ENCODE measurements at regions of chr3 and their contacts with region 1.

Region 1: DNA sequence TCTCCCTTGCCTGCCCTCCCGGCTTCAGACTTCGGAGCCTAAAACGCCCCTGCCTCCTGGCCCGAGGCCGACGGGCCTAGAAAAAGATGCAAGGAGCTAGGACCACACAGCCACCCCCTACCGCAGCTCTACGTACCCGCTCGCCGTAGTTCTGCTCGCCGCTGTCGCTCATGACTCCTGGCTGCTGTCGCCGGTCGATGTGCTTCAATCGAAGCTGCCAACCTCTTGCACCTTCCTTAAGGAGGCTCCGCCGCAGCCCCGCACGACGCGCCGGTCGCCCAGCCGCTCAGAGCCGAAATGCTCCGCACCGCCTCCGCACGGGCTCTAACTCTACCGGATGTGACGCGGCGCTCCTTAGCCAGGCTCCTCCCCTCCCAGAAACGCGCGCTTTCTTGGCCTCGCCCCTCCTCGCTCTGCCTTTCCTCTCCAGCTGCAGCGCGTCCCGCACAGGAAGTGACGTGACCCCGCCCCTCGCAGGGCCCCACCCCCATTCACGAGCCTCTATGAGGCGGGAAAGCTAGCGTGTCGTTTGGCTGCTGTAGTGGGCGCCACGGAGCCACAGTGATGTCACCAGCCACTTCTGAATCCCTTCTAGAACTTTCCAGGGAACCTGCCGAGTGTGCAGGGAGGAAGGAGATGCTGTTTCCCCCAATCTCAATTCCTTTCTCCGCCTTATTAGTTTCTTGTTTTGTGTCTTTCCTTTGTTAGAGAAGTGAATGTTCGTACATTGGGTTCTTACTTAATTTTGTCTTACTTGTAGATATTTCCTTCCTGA is at the start of gene TRA2B:
- DNase-seq: peak; percentile 97 to 99 (median 99)
- ATAC-seq: peak; percentile 88
- H3K4me3 ChIP-seq: peak within 1 kb of the TSS; percentile 93
- H3K4me3 Mint-ChIP-seq: peak within 1 kb of the TSS; percentile 100
- H3K27ac ChIP-seq: peak within 1 kb of the TSS; percentile 97 to 98
- H3K27ac Mint-ChIP-seq: peak within 1 kb of the TSS; percentile 100
- H3K4me1 ChIP-seq: peaks cover 13% of the 10 kb centered on the region
- H3K4me1 Mint-ChIP-seq: peaks cover 41% of the 10 kb centered on the region
- H3K27me3 ChIP-seq: no peaks in the 10 kb centered on the region
- H3K27me3 Mint-ChIP-seq: no peaks in the 10 kb centered on the region
- CTCF ChIP-seq: peak; percentile 41
- total RNA-seq, gene TRA2B: 455 to 472 TPM

Region 2: GRCh38 chr3:185498503-185499396 is 439.1 kb before region 1 on chr3 and contains the start of gene TMEM41A:
- CTCF ChIA-PET with region 1: no interaction called
- POLR2A ChIA-PET with region 1: interaction called, 4 read pairs
- intact Hi-C with region 1: loop called in 1 of 2 experiments (anchors 10 kb)
- DNase-seq: peak; percentile 77 to 94 (median 89)
- ATAC-seq: peak; percentile 98
- H3K4me3 ChIP-seq: peak within 1 kb of the TSS; percentile 89 to 98
- H3K4me3 Mint-ChIP-seq: peak within 1 kb of the TSS; percentile 95
- H3K27ac ChIP-seq: peak within 1 kb of the TSS; percentile 69 to 81
- H3K27ac Mint-ChIP-seq: peak within 1 kb of the TSS; percentile 91
- H3K4me1 ChIP-seq: peaks cover 20% of the 10 kb centered on the region
- H3K4me1 Mint-ChIP-seq: peaks cover 26% of the 10 kb centered on the region
- H3K27me3 ChIP-seq: no peaks in the 10 kb centered on the region
- H3K27me3 Mint-ChIP-seq: peaks cover 2% of the 10 kb centered on the region
- CTCF ChIP-seq: no peak
- total RNA-seq, gene TMEM41A: 28.2 to 30.3 TPM

Region 3: DNA sequence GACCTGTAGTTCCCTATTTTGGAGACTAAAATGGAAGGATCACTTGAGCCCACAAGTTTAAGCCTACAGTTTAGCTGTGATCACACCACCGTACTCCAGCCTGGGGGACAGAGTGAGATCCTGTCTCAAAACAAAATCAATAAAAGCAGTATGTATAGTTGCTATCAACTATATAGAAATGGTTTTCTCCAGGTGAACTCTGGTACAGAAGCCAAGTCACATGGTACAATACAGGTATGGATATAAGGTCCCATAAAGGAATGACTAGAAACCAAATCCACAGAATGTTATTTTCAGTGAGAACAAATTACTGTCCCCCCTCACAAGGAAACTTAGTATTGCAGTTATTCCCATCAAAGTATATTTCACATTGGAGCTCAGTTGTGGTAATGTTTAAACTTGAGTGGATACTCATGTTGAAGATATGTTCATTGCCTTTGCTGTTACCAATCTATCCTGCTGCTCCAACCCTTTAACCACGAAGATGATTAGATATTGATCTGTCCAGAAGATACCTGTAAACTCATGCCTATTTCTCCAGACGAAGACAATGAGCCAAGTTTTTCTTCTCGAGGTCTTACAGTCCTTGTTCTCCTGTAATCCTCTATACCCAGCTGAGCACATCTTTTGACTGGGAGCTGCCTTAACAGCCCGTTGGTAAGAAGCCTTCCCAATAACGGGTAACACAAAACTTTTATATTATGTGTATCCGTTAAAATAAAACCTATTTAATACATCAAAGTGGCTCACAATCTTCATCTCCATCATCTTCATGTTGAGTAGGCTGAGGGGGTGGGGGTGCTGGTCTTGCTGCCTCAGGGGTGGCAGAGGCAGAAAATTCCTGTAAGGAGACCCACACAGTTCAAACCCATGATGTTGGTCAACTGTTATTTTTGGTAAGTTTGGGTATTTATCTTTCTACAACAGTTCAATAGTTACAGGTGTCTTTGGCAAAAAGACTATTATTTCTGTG is 24.7 kb before region 1 on chr3:
- CTCF ChIA-PET with region 1: no interaction called
- POLR2A ChIA-PET with region 1: interaction called, 11 read pairs
- intact Hi-C with region 1: loop called in 1 of 2 experiments (anchors 2 kb)
- DNase-seq: no peak
- ATAC-seq: peak; percentile 18
- H3K4me3 ChIP-seq: no peak overlapping the region
- H3K4me3 Mint-ChIP-seq: no peak overlapping the region
- H3K27ac ChIP-seq: no peak overlapping the region
- H3K27ac Mint-ChIP-seq: peak overlapping the region; percentile 13
- H3K4me1 ChIP-seq: no peaks in the 10 kb centered on the region
- H3K4me1 Mint-ChIP-seq: peaks cover 6% of the 10 kb centered on the region
- H3K27me3 ChIP-seq: no peaks in the 10 kb centered on the region
- H3K27me3 Mint-ChIP-seq: no peaks in the 10 kb centered on the region
- CTCF ChIP-seq: no peak

Region 4: DNA sequence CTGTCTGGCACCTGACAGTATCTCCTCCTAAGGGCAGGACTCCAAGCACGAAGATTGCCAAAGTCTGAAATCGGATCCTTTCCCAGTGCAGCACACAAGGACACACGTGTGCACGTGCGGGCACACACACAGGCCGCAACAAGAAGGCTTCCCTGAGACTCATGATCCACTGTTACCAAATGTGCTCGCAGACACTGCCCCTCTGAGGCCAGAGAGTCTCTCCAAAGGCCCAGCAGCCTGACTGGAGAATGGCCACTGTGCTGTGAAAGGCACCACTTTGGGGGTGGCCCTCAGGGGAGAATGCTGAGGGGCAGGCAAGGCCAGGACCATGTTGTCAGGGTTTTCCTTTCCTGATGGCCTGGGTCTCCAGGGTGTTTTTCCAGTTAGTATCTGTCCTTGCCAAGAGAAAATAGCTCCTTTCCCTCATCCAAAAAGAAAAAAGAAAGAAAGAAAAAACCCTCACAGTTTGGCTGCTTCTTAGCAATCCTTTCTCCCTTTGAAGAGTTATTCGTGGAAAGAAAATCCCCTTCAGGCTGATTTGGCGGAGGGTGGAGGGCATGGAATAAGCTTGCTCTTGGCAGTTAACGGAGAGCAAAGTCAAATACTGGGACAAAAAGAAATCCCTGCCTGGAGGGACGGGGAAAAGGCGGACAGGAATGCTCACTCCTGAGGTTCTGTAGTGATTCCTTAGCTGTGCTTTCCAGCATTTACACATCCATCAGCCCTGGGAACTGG is 283.2 kb after region 1 on chr3:
- CTCF ChIA-PET with region 1: no interaction called
- POLR2A ChIA-PET with region 1: no interaction called
- intact Hi-C with region 1: no loop called
- DNase-seq: no peak
- ATAC-seq: no peak
- H3K4me3 ChIP-seq: no peak overlapping the region
- H3K4me3 Mint-ChIP-seq: no peak overlapping the region
- H3K27ac ChIP-seq: no peak overlapping the region
- H3K27ac Mint-ChIP-seq: no peak overlapping the region
- H3K4me1 ChIP-seq: no peaks in the 10 kb centered on the region
- H3K4me1 Mint-ChIP-seq: no peaks in the 10 kb centered on the region
- H3K27me3 ChIP-seq: no peaks in the 10 kb centered on the region
- H3K27me3 Mint-ChIP-seq: no peaks in the 10 kb centered on the region
- CTCF ChIP-seq: no peak

Region 5: GRCh38 chr3:186570096-186570940 is 632.4 kb after region 1 on chr3 and contains the start of gene DNAJB11:
- CTCF ChIA-PET with region 1: interaction called, 4 read pairs
- POLR2A ChIA-PET with region 1: interaction called, 27 read pairs
- intact Hi-C with region 1: loop called (anchors 1 kb)
- DNase-seq: peak; percentile 94 to 100 (median 97)
- ATAC-seq: peak; percentile 82
- H3K4me3 ChIP-seq: peak within 1 kb of the TSS; percentile 73 to 96
- H3K4me3 Mint-ChIP-seq: peak within 1 kb of the TSS; percentile 94
- H3K27ac ChIP-seq: peak within 1 kb of the TSS; percentile 94 to 97
- H3K27ac Mint-ChIP-seq: peak within 1 kb of the TSS; percentile 98
- H3K4me1 ChIP-seq: peaks cover 30% of the 10 kb centered on the region
- H3K4me1 Mint-ChIP-seq: peaks cover 59% of the 10 kb centered on the region
- H3K27me3 ChIP-seq: no peaks in the 10 kb centered on the region
- H3K27me3 Mint-ChIP-seq: no peaks in the 10 kb centered on the region
- CTCF ChIP-seq: no peak
- total RNA-seq, gene DNAJB11: 70.2 to 73.4 TPM

Region 6: GRCh38 chr3:186826976-186827731 is 889.3 kb after region 1 on chr3:
- CTCF ChIA-PET with region 1: no interaction called
- POLR2A ChIA-PET with region 1: no interaction called
- intact Hi-C with region 1: loop called in 1 of 2 experiments (anchors 2 kb)
- DNase-seq: peak; percentile 59 to 95 (median 83)
- ATAC-seq: peak; percentile 93
- H3K4me3 ChIP-seq: peak overlapping the region; percentile 56 to 70
- H3K4me3 Mint-ChIP-seq: peak overlapping the region; percentile 75
- H3K27ac ChIP-seq: no peak overlapping the region
- H3K27ac Mint-ChIP-seq: no peak overlapping the region
- H3K4me1 ChIP-seq: peaks cover 21% of the 10 kb centered on the region
- H3K4me1 Mint-ChIP-seq: peaks cover 24% of the 10 kb centered on the region
- H3K27me3 ChIP-seq: peaks cover 14 to 26% of the 10 kb centered on the region in 2 experiments
- H3K27me3 Mint-ChIP-seq: peaks cover 50% of the 10 kb centered on the region
- CTCF ChIP-seq: no peak

Measured in CD8-positive, alpha-beta T cell (primary cell).